ENCODE measurements at regions of chr22 and their contacts with region 1.

Region 1: GRCh38 chr22:30005213-30005857 is 74.9 kb upstream of the HORMAD2 start:
- DNase-seq: peak; percentile 80
- ATAC-seq: peak; percentile 86
- H3K4me3 Mint-ChIP-seq: no peak overlapping the region
- H3K27ac Mint-ChIP-seq: no peak overlapping the region
- H3K4me1 Mint-ChIP-seq: peaks cover 5% of the 10 kb centered on the region
- H3K27me3 Mint-ChIP-seq: no peaks in the 10 kb centered on the region

Region 2: DNA sequence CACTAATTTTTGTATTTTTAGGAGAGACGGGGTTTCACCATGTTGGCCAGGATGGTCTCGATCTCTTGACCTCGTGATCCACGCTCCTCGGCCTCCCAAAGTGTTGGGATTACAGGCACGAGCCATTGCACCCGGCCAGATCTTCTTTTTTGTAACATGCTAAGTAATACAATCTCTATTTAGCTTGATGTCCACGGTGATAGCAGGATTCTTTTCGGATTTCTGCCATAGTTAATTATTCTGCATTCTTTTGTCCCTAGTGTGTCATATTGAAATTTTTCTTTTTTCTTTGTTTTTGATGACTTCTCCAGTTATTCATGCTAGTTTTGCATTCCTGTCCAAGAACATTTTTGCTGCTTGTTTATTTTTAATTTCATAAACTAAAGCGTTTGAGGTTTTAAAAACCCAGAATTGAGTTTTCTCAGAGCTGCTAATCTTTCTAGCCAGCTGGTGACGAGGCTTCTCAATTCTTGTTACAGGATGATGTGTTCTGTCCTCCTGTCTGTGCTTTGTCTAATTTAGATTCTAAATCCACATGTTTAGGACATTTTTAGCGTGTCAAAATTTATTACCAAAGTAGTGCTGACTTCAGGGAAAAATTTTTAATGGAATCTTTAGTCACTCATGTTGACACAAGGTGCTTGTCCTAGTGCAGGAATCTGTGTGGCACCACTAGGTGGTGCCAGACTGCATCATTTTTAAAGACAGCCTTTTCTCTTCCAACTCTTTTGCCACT is 380.1 kb before region 1 on chr22:
- CTCF ChIA-PET with region 1: interaction called, 7 read pairs
- POLR2A ChIA-PET with region 1: no interaction called
- intact Hi-C with region 1: loop called in 1 of 2 experiments (anchors 1 kb)
- DNase-seq: peak; percentile 68
- ATAC-seq: peak; percentile 61
- H3K4me3 Mint-ChIP-seq: no peak overlapping the region
- H3K27ac Mint-ChIP-seq: peak overlapping the region; percentile 14
- H3K4me1 Mint-ChIP-seq: peaks cover 65% of the 10 kb centered on the region
- H3K27me3 Mint-ChIP-seq: no peaks in the 10 kb centered on the region

Region 3: GRCh38 chr22:29689880-29690213 is 315.5 kb before region 1 on chr22:
- CTCF ChIA-PET with region 1: interaction called, 10 read pairs
- POLR2A ChIA-PET with region 1: no interaction called
- intact Hi-C with region 1: loop called in 1 of 2 experiments (anchors 1 kb)
- DNase-seq: peak; percentile 69
- ATAC-seq: peak; percentile 51
- H3K4me3 Mint-ChIP-seq: no peak overlapping the region
- H3K27ac Mint-ChIP-seq: no peak overlapping the region
- H3K4me1 Mint-ChIP-seq: no peaks in the 10 kb centered on the region
- H3K27me3 Mint-ChIP-seq: no peaks in the 10 kb centered on the region

Region 4: DNA sequence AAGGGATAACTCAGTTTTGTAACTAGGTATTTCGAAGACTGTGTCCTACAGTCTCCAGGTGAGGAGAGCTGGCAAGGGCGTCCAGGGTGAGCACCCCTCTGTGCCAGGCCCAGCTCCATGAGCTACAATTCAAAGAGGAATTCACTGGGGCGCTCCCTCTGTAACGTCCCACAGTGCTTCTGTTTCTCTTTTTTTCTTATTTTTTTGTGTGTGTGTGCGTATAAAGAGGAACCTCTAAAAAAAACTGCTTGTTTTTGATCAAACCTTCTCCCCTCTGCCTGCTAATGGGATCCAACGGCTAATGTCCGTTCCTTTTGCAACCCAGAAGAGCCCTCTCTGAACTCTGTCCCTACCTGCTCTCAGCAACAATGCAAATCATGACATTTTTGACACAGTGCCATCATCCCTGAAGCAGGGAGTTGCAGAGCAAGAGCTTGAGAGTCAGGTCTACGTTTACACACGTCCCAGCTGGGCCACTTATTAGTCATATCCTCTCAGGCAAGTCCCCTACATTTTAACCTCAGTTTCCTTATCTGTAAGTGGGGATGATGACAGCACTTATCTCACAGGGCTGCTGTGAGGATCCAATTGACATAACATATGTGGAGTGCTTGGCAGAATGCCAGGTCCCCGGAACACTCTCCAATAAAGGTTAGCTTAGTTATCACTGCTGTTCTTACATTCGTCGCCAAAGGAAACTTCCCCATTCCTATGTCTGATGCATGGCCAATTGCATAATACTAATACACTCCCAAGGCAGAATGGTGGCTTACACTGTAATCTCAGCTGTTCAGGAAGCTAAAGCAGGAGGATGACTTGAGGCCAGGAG is 184.2 kb before region 1 on chr22:
- CTCF ChIA-PET with region 1: interaction called, 4 read pairs
- POLR2A ChIA-PET with region 1: no interaction called
- intact Hi-C with region 1: loop called in 1 of 2 experiments (anchors 1 kb)
- DNase-seq: peak; percentile 79
- ATAC-seq: peak; percentile 98
- H3K4me3 Mint-ChIP-seq: no peak overlapping the region
- H3K27ac Mint-ChIP-seq: peak overlapping the region; percentile 76
- H3K4me1 Mint-ChIP-seq: peaks cover 9% of the 10 kb centered on the region
- H3K27me3 Mint-ChIP-seq: no peaks in the 10 kb centered on the region

Region 5: GRCh38 chr22:29883045-29883774 is 122.1 kb before region 1 on chr22 and contains the start of gene MTMR3:
- CTCF ChIA-PET with region 1: interaction called, 13 read pairs
- POLR2A ChIA-PET with region 1: no interaction called
- intact Hi-C with region 1: no loop called
- DNase-seq: peak; percentile 95
- ATAC-seq: peak; percentile 83
- H3K4me3 Mint-ChIP-seq: peak within 1 kb of the TSS; percentile 89
- H3K27ac Mint-ChIP-seq: peak within 1 kb of the TSS; percentile 84
- H3K4me1 Mint-ChIP-seq: peaks cover 6% of the 10 kb centered on the region
- H3K27me3 Mint-ChIP-seq: no peaks in the 10 kb centered on the region
- total RNA-seq, gene MTMR3: 19.2 to 22.8 TPM

Region 6: DNA sequence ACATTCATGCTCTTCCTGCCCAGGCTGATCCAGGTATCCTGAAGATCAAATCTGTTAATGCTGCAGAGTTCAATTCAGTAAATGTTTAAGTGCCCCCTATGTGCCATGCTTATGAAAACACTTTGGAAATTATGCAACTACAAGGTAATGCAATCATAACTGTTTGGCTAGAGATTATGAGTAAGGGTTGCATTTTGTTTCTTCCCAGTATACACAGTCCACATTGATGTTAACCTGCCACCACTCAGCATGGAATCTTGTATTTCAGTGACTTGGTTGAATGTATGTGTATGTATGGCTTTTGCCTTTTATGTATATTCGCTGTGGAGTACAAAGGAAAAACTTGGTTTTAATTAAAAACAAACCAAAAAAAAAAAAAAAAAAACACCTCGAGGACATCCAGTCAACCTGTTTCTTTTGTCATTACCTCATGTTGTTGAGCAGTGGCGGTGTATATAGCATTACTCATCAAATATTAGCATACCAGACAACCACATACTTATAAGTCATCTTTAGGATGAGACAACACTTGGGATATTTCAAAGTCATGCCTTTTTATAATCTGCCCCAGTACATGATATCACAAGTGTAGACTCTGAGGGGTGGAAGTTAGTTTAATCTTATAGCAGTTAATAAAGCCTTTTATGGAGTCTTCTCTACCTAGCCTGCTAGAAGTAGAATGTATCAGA is 11.2 kb before region 1 on chr22:
- CTCF ChIA-PET with region 1: interaction called, 21 read pairs
- POLR2A ChIA-PET with region 1: no interaction called
- intact Hi-C with region 1: no loop called
- DNase-seq: no peak
- ATAC-seq: peak; percentile 90
- H3K4me3 Mint-ChIP-seq: no peak overlapping the region
- H3K27ac Mint-ChIP-seq: peak overlapping the region; percentile 28
- H3K4me1 Mint-ChIP-seq: peaks cover 14% of the 10 kb centered on the region
- H3K27me3 Mint-ChIP-seq: no peaks in the 10 kb centered on the region

Region 7: DNA sequence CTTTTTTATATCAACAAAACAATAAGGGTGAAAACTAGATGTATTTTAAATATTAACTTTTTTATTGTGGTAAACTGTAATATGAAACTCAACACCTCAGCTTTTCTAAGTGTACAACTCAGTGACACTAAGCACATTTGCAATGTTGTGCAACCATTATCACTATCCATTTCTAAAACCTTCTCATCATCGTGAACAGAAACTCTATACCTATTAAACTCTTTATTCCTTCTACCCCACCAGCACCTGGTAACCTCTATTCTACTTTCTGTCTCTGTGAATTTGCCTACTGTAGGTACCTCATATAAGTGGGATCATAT is 84.3 kb after region 1 on chr22:
- CTCF ChIA-PET with region 1: interaction called, 4 read pairs
- POLR2A ChIA-PET with region 1: no interaction called
- intact Hi-C with region 1: loop called in 1 of 2 experiments (anchors 5 kb)
- DNase-seq: no peak
- ATAC-seq: no peak
- H3K4me3 Mint-ChIP-seq: no peak overlapping the region
- H3K27ac Mint-ChIP-seq: no peak overlapping the region
- H3K4me1 Mint-ChIP-seq: peaks cover 7% of the 10 kb centered on the region
- H3K27me3 Mint-ChIP-seq: peaks cover 4% of the 10 kb centered on the region

Region 8: GRCh38 chr22:30150212-30150611 is 144.9 kb after region 1 on chr22:
- CTCF ChIA-PET with region 1: no interaction called
- POLR2A ChIA-PET with region 1: no interaction called
- intact Hi-C with region 1: no loop called
- DNase-seq: no peak
- ATAC-seq: no peak
- H3K4me3 Mint-ChIP-seq: no peak overlapping the region
- H3K27ac Mint-ChIP-seq: no peak overlapping the region
- H3K4me1 Mint-ChIP-seq: no peaks in the 10 kb centered on the region
- H3K27me3 Mint-ChIP-seq: no peaks in the 10 kb centered on the region

Region 9: GRCh38 chr22:30305519-30305905 is 300.2 kb after region 1 on chr22:
- CTCF ChIA-PET with region 1: no interaction called
- POLR2A ChIA-PET with region 1: no interaction called
- intact Hi-C with region 1: no loop called
- DNase-seq: peak; percentile 68
- ATAC-seq: peak; percentile 79
- H3K4me3 Mint-ChIP-seq: peak overlapping the region; percentile 59
- H3K27ac Mint-ChIP-seq: peak overlapping the region; percentile 85
- H3K4me1 Mint-ChIP-seq: peaks cover 97% of the 10 kb centered on the region
- H3K27me3 Mint-ChIP-seq: no peaks in the 10 kb centered on the region

Measured in activated CD4-positive, alpha-beta T cell treated with anti-CD3 and anti-CD28 coated beads for 36 hours (primary cell).